H1 (cell line): ENCODE measurements at regions of chr14 and their contacts with region 1.

Region 1: DNA sequence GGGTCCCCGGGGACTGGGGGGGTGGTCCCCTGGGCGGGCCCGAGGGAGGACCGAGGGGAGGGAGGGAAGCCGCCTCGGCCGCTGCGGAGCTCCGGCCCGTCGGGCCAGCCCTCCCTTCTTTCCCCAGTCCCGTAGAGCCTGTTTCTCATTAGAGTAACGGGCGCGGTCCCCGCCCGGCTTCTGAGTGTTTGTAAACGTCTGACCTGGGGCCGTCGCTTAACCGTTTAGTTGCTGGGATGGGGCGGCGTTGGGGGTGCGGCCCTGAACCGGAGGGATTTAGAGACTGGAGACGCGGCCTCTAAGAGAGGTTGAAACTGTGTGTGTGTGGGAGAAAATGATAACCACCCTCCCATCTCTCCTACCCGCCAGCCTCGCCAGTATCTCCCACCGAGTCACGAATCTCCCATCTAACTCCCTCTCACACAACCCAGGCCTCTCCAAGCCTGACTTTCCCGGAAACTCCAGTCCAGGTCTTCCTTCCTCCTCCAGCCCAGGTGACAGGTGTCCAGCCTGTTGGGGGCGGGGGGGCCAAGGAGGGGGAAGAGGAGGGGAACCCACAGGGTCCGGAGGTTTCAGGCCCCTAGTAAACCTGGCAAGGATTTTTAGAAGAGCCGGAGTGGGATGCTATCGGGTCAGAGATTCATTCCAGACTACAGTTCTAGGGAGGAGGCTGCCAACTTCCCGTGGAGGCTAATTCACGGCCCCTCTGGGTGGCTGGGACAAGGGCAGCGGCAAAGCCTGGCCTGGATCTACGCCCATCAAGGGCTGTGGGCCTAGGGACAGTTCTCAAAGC is 1.1 kb upstream of the NFATC4 start:
- DNase-seq: peak in 1 of 2 experiments; percentile 94
- H3K4me3 ChIP-seq: peak overlapping the region; percentile 48 to 100 (median 75)
- H3K27ac ChIP-seq: peak overlapping the region; percentile 28; the same call in 1 of the 2 replicates
- H3K4me1 ChIP-seq: peaks cover 0 to 10% (median 6%) of the 10 kb centered on the region in 4 experiments; a peak in 5 of 7 replicates
- H3K27me3 ChIP-seq: peaks cover 0 to 3% (median 2%) of the 10 kb centered on the region in 4 experiments; a peak in 2 of 7 replicates
- CTCF ChIP-seq: no peak
- EP300 ChIP-seq: no peak
- POLR2A ChIP-seq: no peak
- RAD21 ChIP-seq: no peak

Region 2: DNA sequence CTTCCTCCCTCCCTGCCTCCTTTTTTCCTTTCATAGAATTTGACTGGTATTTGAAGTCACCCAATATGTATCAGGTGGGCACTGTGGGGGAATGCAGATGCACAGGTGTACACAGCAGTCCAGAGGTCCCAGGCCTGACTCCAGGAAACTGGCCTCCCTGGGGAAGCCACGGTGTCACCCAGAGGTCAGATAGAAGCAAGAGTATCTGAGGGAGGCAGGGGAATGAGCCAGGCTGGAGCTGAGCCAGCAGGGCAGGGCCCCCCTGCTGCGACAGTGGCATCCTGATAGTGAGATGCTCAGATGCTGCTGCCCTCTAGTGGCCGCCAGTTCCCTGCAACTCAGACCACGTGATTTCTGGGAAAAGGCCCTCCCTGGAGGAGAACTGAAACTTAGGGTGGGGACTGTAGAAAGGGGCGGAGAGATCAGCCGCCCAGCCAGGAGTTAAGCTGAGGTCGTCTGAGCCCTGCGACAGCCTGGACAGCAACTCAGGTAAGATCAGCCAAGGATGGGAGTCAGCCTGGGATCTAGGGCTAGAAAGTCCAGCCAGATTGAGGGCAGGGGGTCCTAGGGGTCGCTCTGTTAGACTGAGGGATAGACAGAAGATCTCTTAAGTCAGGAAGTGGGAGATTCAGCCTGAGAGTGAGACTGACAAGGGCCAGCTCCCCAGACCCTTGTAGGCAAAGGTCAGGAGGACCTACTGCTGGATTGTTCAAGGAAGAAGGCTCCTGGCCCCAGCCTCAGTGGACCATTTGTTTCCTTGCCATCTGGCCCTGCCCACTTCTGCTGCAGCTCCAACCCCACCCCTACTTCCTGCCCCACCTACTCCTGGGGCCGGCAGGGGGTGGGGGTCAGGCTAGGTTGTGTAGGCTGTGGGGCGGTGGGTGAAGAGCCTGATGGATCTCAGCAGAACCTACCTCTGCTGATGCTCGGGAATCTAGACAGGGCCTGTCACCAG is 205.8 kb before region 1 on chr14 and contains the start of gene IRF9:
- CTCF ChIA-PET with region 1: no interaction called
- POLR2A ChIA-PET with region 1: no interaction called
- DNase-seq: peak; percentile 94 to 100
- H3K4me3 ChIP-seq: peak within 1 kb of the TSS; percentile 6 to 52 (median 20); a peak in 5 of 8 replicates
- H3K27ac ChIP-seq: peak within 1 kb of the TSS; percentile 55; the same call in 1 of the 2 replicates
- H3K4me1 ChIP-seq: peaks cover 0 to 10% (median 2%) of the 10 kb centered on the region in 4 experiments; a peak in 3 of 7 replicates
- H3K27me3 ChIP-seq: no peaks in the 10 kb centered on the region
- CTCF ChIP-seq: peak; percentile 85 to 97 (median 95)
- EP300 ChIP-seq: 0 out of 3 replicates have a peak, but pooled peaks of 1 of the 2 experiments have one; percentile 68
- POLR2A ChIP-seq: peak in 1 of 2 experiments; percentile 48; a peak in 1 of 3 replicates
- RAD21 ChIP-seq: peak; percentile 73 to 78
- total RNA-seq, gene IRF9: 11.1 and 11.4 TPM in 2 replicates

Region 3: GRCh38 chr14:24282736-24283135 is 84.2 kb before region 1 on chr14:
- CTCF ChIA-PET with region 1: no interaction called
- POLR2A ChIA-PET with region 1: no interaction called
- DNase-seq: no peak
- H3K4me3 ChIP-seq: no peak overlapping the region
- H3K27ac ChIP-seq: no peak overlapping the region
- H3K4me1 ChIP-seq: no peaks in the 10 kb centered on the region
- H3K27me3 ChIP-seq: no peaks in the 10 kb centered on the region
- CTCF ChIP-seq: no peak
- EP300 ChIP-seq: no peak
- POLR2A ChIP-seq: no peak
- RAD21 ChIP-seq: no peak

Region 4: DNA sequence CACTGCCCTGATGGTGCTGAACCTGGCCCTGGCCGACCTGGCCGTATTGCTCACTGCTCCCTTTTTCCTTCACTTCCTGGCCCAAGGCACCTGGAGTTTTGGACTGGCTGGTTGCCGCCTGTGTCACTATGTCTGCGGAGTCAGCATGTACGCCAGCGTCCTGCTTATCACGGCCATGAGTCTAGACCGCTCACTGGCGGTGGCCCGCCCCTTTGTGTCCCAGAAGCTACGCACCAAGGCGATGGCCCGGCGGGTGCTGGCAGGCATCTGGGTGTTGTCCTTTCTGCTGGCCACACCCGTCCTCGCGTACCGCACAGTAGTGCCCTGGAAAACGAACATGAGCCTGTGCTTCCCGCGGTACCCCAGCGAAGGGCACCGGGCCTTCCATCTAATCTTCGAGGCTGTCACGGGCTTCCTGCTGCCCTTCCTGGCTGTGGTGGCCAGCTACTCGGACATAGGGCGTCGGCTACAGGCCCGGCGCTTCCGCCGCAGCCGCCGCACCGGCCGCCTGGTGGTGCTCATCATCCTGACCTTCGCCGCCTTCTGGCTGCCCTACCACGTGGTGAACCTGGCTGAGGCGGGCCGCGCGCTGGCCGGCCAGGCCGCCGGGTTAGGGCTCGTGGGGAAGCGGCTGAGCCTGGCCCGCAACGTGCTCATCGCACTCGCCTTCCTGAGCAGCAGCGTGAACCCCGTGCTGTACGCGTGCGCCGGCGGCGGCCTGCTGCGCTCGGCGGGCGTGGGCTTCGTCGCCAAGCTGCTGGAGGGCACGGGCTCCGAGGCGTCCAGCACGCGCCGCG is 50.9 kb before region 1 on chr14:
- CTCF ChIA-PET with region 1: no interaction called
- POLR2A ChIA-PET with region 1: no interaction called
- DNase-seq: peak in 1 of 2 experiments; percentile 78
- H3K4me3 ChIP-seq: no peak overlapping the region
- H3K27ac ChIP-seq: no peak overlapping the region
- H3K4me1 ChIP-seq: no peaks in the 10 kb centered on the region; a peak in 2 of 7 replicates
- H3K27me3 ChIP-seq: peaks cover 0 to 42% (median 31%) of the 10 kb centered on the region in 4 experiments; a peak in 6 of 7 replicates
- CTCF ChIP-seq: peak; percentile 49 to 52 (median 50)
- EP300 ChIP-seq: no peak
- POLR2A ChIP-seq: no peak
- RAD21 ChIP-seq: peak; percentile 6 to 37; a peak in 3 of 4 replicates

Region 5: GRCh38 chr14:24332268-24332993 is 34.5 kb before region 1 on chr14:
- CTCF ChIA-PET with region 1: interaction called, 126 read pairs
- POLR2A ChIA-PET with region 1: interaction called, 5 read pairs
- DNase-seq: peak; percentile 34 to 89
- H3K4me3 ChIP-seq: peak overlapping the region; percentile 32 to 62 (median 52)
- H3K27ac ChIP-seq: no peak overlapping the region
- H3K4me1 ChIP-seq: peaks cover 0 to 16% (median 9%) of the 10 kb centered on the region in 4 experiments; a peak in 5 of 7 replicates
- H3K27me3 ChIP-seq: peaks cover 39 to 85% (median 59%) of the 10 kb centered on the region in 4 experiments
- CTCF ChIP-seq: peak in 2 of 3 experiments; percentile 56 to 79; a peak in 3 of 4 replicates
- EP300 ChIP-seq: no peak
- POLR2A ChIP-seq: no peak
- RAD21 ChIP-seq: peak; percentile 50 to 54

Region 6: GRCh38 chr14:24351517-24351916 is 15.4 kb before region 1 on chr14:
- CTCF ChIA-PET with region 1: interaction called, 27 read pairs
- POLR2A ChIA-PET with region 1: interaction called, 3 read pairs
- DNase-seq: no peak
- H3K4me3 ChIP-seq: no peak overlapping the region
- H3K27ac ChIP-seq: no peak overlapping the region
- H3K4me1 ChIP-seq: no peaks in the 10 kb centered on the region
- H3K27me3 ChIP-seq: peaks cover 0 to 11% (median 9%) of the 10 kb centered on the region in 4 experiments; a peak in 5 of 7 replicates
- CTCF ChIP-seq: 0 out of 4 replicates have a peak, but pooled peaks of 1 of the 3 experiments have one; percentile 4
- EP300 ChIP-seq: no peak
- POLR2A ChIP-seq: no peak
- RAD21 ChIP-seq: 0 out of 4 replicates have a peak, but pooled peaks of 1 of the 2 experiments have one; percentile 2

Region 7: GRCh38 chr14:24398653-24399446 is 31.9 kb after region 1 on chr14 and contains the start of gene NYNRIN:
- CTCF ChIA-PET with region 1: interaction called, 11 read pairs
- POLR2A ChIA-PET with region 1: interaction called, 5 read pairs
- DNase-seq: peak in 1 of 2 experiments; percentile 81
- H3K4me3 ChIP-seq: peak within 1 kb of the TSS; percentile 68 to 80 (median 78)
- H3K27ac ChIP-seq: no peak within 1 kb of the TSS
- H3K4me1 ChIP-seq: peaks cover 0 to 14% (median 10%) of the 10 kb centered on the region in 4 experiments
- H3K27me3 ChIP-seq: peaks cover 0 to 3% (median 0%) of the 10 kb centered on the region in 4 experiments; a peak in 1 of 7 replicates
- CTCF ChIP-seq: no peak
- EP300 ChIP-seq: no peak
- POLR2A ChIP-seq: no peak
- RAD21 ChIP-seq: no peak
- total RNA-seq, gene NYNRIN: 18.3 and 19.6 TPM in 2 replicates

Region 8: GRCh38 chr14:24425704-24426103 is 58.8 kb after region 1 on chr14:
- CTCF ChIA-PET with region 1: interaction called, 207 read pairs
- POLR2A ChIA-PET with region 1: interaction called, 13 read pairs
- DNase-seq: no peak
- H3K4me3 ChIP-seq: no peak overlapping the region
- H3K27ac ChIP-seq: no peak overlapping the region
- H3K4me1 ChIP-seq: peaks cover 0 to 13% (median 9%) of the 10 kb centered on the region in 4 experiments; a peak in 6 of 7 replicates
- H3K27me3 ChIP-seq: peaks cover 0 to 20% (median 1%) of the 10 kb centered on the region in 4 experiments; a peak in 3 of 7 replicates
- CTCF ChIP-seq: no peak
- EP300 ChIP-seq: no peak
- POLR2A ChIP-seq: no peak
- RAD21 ChIP-seq: no peak